Esophagus muscularis mucosa (tissue), 4 donors: ENCODE measurements at regions of chr12 and their contacts with region 1.

Region 1: DNA sequence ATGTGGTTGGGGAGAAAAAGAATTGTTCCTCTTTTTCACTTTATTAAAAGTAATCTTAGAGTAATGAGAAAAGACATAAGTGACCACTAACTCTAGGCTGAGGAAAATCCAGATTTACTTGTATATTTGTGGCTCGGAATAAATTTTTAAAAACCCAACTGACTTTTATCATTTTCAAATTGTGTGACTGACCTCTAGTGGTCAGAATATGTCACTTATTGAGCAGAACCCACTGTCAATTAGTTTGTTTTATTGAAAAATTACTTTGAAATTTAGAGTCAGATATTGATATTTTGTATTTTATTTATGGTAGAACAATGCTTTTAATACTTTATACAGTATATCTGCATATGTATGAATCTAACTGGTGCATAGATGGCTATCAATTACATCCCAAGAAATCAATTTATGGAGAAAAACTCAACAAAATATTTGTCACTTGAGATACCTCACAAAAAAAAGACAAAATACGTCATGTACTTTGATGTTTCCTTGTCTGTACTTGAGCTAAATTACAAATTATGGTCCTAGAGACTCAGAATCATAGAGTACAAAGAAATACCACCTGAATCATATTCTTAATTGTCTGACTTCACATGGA is 229.4 kb downstream of the CNTN1 start:
- DNase-seq: no peak
- H3K4me3 ChIP-seq: no peak overlapping the region
- H3K27ac ChIP-seq: no peak overlapping the region
- H3K4me1 ChIP-seq: no peaks in the 10 kb centered on the region
- H3K27me3 ChIP-seq: no peaks in the 10 kb centered on the region
- CTCF ChIP-seq: peak; percentile 64 to 82 (median 76)
- EP300 ChIP-seq: no peak
- POLR2A ChIP-seq: no peak

Region 2: GRCh38 chr12:40622246-40622838 is 299.3 kb before region 1 on chr12:
- intact Hi-C with region 1: loop called (anchors 1 kb)
- DNase-seq: no peak
- H3K4me3 ChIP-seq: no peak overlapping the region
- H3K27ac ChIP-seq: no peak overlapping the region
- H3K4me1 ChIP-seq: peaks cover 0 to 7% (median 0%) of the 10 kb centered on the region in 4 donors
- H3K27me3 ChIP-seq: no peaks in the 10 kb centered on the region
- CTCF ChIP-seq: peak; percentile 61 to 85 (median 79)
- EP300 ChIP-seq: no peak
- POLR2A ChIP-seq: no peak

Region 3: DNA sequence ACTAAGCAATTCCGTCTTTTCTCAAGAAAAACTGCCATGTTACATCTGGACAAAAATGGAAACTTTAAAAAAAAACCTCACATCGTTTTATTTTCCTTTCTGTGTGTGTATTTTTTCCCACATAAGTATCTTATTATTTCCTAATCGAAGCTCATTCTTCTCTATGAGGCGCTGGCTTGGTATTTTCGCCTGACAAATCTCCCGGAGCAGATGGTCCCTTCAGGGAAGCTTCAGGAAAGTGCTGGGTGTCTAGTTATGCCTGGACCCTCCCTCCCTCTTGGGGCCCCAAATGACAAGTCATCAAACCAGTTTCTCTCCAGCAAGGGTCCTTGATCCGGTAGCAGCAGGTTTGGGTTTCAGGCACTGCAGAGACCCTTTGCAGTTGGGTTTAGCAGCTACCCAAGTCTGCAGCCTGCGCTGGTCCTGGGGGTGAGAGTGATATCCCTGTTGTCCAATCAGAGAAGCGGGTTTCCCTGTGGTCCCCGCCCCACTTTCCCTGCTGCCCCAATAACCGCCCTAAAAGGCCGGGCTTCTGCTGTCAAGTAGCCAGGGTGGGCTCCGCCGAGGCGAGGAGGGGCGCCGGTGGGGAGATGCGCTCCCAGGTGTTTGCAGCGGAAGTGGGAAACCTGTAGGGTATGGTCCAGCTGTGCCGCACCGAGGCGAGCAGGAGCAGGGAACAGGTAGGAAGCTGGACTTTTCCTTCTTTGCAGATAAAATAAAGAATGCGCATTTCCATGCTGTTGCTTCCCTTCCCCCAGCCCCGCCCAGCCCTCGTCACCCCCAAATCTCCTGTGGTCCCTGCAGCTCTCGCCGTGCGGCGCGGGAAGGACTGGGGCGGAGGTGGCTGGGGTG is 229.5 kb before region 1 on chr12 and contains the start of gene CNTN1:
- intact Hi-C with region 1: loop called (anchors 5 kb)
- DNase-seq: no peak
- H3K4me3 ChIP-seq: peak within 1 kb of the TSS; percentile 75 to 92 (median 82)
- H3K27ac ChIP-seq: peak within 1 kb of the TSS; percentile 75 to 82 (median 78)
- H3K4me1 ChIP-seq: peaks cover 11 to 18% (median 15%) of the 10 kb centered on the region in 4 donors
- H3K27me3 ChIP-seq: peaks cover 0 to 7% (median 0%) of the 10 kb centered on the region in 4 donors
- CTCF ChIP-seq: no peak
- EP300 ChIP-seq: no peak
- POLR2A ChIP-seq: no peak
- total RNA-seq, gene CNTN1: 44.2 to 65.6 (median 57.6) TPM

Region 4: GRCh38 chr12:40745386-40745785 is 176.3 kb before region 1 on chr12:
- intact Hi-C with region 1: loop called (anchors 5 kb)
- DNase-seq: no peak
- H3K4me3 ChIP-seq: no peak overlapping the region
- H3K27ac ChIP-seq: no peak overlapping the region
- H3K4me1 ChIP-seq: peaks cover 0 to 7% (median 0%) of the 10 kb centered on the region in 4 donors
- H3K27me3 ChIP-seq: no peaks in the 10 kb centered on the region
- CTCF ChIP-seq: peak in 1 of 3 experiments; percentile 30
- EP300 ChIP-seq: no peak
- POLR2A ChIP-seq: no peak